Dorsolateral prefrontal cortex (tissue), 120 donors: ENCODE measurements at regions of chr5 and their contacts with region 1.

Region 1: DNA sequence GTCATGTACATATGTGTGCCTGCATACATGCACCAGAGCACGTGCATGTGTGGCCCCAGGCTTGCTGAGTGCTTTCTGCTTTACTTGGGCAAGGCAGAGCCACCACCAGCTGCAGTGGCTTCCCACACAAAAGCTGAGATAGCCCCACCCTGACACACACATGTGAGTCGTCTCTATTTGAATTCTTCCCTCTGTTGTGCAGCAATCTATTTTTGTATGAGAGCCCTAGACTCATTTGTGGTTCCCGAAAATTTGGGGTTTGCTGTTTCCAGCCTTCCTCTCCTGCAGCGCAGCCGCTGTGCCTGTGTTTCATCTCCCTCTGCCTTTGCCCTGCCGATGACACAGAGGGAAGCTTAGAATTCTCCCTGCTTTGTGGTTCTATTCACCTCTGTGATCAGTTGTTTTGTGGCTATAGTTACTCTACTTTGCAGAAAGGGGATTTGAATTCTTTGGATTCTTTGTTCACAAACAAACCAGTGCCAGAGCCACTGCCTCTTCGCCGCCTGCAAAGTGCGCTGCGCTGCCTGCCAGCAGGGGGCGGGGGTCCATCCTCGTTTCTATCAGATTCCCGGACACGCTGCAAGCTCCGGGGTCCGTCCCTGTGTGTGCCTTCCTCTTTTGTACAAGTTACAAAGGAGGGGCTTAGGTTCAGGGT is 95.8 kb upstream of the DAP start:
- DNase-seq: peak; percentile 23 to 83 (median 72)
- H3K4me3 ChIP-seq: peak overlapping the region in 58 of 59 donors; percentile 12 to 62 (median 42)
- H3K27ac ChIP-seq: peak overlapping the region in 35 of 59 donors; percentile 0 to 79 (median 44)
- H3K27me3 ChIP-seq: no peaks in the 10 kb centered on the region
- CTCF ChIP-seq: peak; percentile 68 to 92 (median 85)

Region 2: GRCh38 chr5:10761166-10761932 is 95.5 kb before region 1 on chr5 and contains the start of gene DAP:
- intact Hi-C with region 1: loop called in 1 of 2 experiments (anchors 10 kb)
- DNase-seq: peak; percentile 36 to 82 (median 64)
- H3K4me3 ChIP-seq: peak within 1 kb of the TSS; percentile 55 to 90 (median 76)
- H3K27ac ChIP-seq: peak within 1 kb of the TSS; percentile 45 to 97 (median 90)
- H3K27me3 ChIP-seq: no peaks in the 10 kb centered on the region
- CTCF ChIP-seq: peak in 4 of 56 donors; percentile 10 to 21 (median 14)
- total RNA-seq, gene DAP: 16.1 to 43.5 (median 28.7) TPM

Region 3: DNA sequence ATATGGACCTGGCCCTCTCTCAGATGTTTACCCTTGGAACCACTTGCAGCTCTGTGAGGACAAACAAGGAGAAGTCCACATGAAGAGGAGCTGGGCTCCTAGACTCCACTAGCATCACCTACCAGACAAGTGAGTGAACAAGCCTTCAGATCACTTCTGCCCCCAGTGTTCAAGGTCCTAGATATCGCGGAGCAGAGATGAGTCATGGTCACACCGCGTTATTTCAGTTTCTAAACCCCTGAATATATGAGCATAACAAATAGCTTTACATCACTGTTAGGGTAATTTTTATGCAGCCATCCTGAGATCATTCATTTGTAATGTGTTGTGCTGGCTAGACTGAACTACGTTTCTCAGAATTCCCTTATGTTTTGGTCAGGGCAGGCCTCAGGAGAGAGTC is 18.8 kb before region 1 on chr5:
- intact Hi-C with region 1: no loop called
- DNase-seq: no peak
- H3K4me3 ChIP-seq: no peak overlapping the region
- H3K27ac ChIP-seq: no peak overlapping the region
- H3K27me3 ChIP-seq: no peaks in the 10 kb centered on the region
- CTCF ChIP-seq: no peak

Region 4: DNA sequence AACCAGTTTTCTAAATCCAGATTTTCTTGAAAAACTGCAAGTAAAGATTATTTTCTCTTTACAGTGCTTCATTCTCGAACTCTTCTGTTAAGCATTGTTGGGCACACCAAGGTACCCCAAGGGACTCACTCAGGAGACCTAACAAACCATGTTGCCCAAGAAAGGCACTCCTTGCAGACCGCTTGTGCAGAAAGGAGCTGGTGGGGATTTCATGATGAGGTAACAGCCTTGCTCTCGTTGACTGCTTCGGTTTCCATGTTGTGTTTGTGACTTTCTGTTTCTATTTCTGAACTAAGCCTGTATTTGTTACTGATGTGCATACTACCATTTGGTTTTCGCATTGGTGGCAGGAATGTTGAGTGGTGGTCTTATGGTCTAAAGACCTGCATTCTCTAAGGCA is 170.8 kb after region 1 on chr5:
- intact Hi-C with region 1: no loop called
- DNase-seq: no peak
- H3K4me3 ChIP-seq: no peak overlapping the region
- H3K27ac ChIP-seq: no peak overlapping the region
- H3K27me3 ChIP-seq: no peaks in the 10 kb centered on the region
- CTCF ChIP-seq: no peak

Region 5: DNA sequence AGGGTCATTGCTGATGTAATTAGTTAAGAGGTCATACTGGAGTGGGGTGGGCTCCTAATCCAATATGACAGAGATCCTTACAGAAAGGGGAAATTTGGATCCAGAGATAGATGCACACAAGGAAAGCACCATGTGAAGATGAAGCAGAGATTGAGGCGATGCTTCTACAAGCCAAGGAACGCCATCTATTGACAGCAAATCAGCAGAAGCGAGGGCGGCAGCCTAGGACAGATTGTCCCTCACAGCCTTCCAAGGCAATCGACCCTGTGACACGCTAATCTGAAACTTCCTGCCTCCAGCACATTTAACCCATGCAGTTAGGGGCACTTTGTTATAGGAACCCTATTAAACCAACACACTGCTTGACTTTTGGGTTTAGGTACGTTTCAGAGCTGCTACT is 189.3 kb after region 1 on chr5:
- intact Hi-C with region 1: loop called (anchors 5 to 10 kb)
- DNase-seq: peak in 3 of 10 donors; percentile 33 to 48 (median 48)
- H3K4me3 ChIP-seq: no peak overlapping the region
- H3K27ac ChIP-seq: peak overlapping the region in 2 of 59 donors; percentile 11 to 24
- H3K27me3 ChIP-seq: no peaks in the 10 kb centered on the region
- CTCF ChIP-seq: peak in 49 of 56 donors; percentile 10 to 67 (median 40)

Region 6: GRCh38 chr5:11619339-11620024 is 762.7 kb after region 1 on chr5:
- intact Hi-C with region 1: loop called in 1 of 2 experiments (anchors 10 kb)
- DNase-seq: no peak
- H3K4me3 ChIP-seq: no peak overlapping the region
- H3K27ac ChIP-seq: peak overlapping the region in 11 of 59 donors; percentile 1 to 54 (median 27)
- H3K27me3 ChIP-seq: no peaks in the 10 kb centered on the region
- CTCF ChIP-seq: peak; percentile 32 to 89 (median 66)

Region 7: GRCh38 chr5:12023614-12024241 is 1166.9 kb after region 1 on chr5:
- intact Hi-C with region 1: loop called in 1 of 2 experiments (anchors 10 kb)
- DNase-seq: no peak
- H3K4me3 ChIP-seq: no peak overlapping the region
- H3K27ac ChIP-seq: no peak overlapping the region
- H3K27me3 ChIP-seq: no peaks in the 10 kb centered on the region
- CTCF ChIP-seq: peak; percentile 48 to 84 (median 71)